ENCODE measurements at regions of chr7 and their contacts with region 1.

Region 1: DNA sequence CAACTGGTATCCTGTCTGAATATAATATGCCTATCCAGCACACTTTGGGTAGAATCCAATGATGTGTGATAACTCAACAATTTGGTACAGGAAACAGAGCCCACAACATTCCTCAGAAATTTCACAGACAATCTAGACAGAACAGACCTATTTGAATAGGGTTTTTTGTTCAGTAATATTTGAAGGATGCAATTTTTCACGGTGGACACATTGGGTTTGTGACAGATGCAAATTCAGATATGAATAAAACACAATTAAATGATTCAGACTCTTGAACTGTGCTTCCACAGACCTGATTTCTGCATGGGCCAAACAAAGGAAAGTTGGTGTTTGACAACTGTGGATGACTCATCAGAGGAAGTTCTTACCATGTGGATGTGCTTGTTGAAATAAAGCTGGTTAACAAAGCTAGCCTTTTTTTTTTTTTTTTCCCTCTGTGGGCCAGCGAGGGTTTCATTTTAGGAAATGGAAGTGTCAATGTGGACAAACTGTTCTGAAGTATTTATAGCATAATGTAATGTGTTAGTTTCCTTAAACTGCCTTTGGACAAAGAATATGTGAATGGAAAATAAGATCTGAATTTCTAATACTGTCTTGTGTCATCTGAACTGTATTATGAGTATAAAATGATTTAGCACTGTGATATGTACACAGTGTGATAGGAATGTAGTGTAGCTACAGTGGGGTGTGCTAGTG is 43.2 kb upstream of the FAM133B start:
- DNase-seq: no peak
- ATAC-seq: peak; percentile 82

Region 2: GRCh38 chr7:92584996-92585395 is 48.4 kb before region 1 on chr7:
- intact Hi-C with region 1: no loop called
- DNase-seq: no peak
- ATAC-seq: no peak

Region 3: GRCh38 chr7:92682903-92683539 is 49.7 kb after region 1 on chr7:
- intact Hi-C with region 1: loop called (anchors 5 kb)
- DNase-seq: no peak
- ATAC-seq: no peak

Measured in Right ventricle myocardium inferior (tissue), 1 donor.